ENCODE measurements at regions of chr6 and their contacts with region 1.

Region 1: GRCh38 chr6:99330159-99330558 is 19.3 kb downstream of the FAXC start:
- DNase-seq: peak; percentile 52
- H3K4me3 Mint-ChIP-seq: no peak overlapping the region
- H3K27ac Mint-ChIP-seq: no peak overlapping the region
- H3K4me1 Mint-ChIP-seq: no peaks in the 10 kb centered on the region
- H3K27me3 Mint-ChIP-seq: no peaks in the 10 kb centered on the region
- CTCF ChIP-seq: peak; percentile 66

Region 2: DNA sequence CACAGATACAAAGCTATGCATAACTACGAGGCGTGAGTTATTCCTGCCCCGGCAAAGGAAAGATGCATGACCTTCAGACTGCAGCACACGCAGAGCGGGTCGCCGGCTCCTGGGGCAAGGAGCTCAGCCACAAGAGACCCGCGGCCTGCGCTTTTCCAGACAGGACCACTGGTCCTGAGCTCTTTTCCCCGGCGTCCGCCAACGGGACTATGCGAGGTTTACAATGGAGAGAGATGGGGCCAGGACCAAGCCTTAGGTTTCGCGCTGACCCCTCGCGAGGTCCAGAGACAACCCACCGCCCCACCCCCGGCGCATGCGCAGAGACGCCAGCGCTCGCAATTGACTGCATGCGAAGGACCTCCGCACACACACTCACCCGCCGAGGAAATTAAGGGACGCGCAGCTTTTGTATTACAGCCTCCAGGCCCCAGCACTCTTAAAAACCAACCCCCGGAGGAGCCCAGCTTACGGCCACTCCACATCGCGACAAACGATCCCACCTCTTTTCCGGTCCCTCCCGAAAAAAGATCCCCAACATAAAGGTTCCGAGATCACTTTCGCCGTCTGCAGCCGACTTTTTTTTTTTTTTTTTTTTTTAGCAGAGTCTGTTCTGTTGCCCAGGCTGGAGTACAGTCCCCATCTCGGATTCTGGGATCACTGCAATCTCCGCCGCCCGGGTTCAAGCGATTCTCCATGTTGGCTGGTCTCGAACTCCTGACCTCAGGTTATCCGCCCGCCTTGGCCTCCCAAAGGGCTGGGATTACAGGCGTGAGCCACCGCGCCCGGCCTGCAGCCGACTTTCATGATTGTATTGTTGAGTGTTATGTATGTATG is 63.8 kb after region 1 on chr6 and contains the start of gene COQ3:
- CTCF ChIA-PET with region 1: interaction called, 4 read pairs
- intact Hi-C with region 1: loop called (anchors 1 kb)
- DNase-seq: peak; percentile 78
- H3K4me3 Mint-ChIP-seq: peak within 1 kb of the TSS; percentile 85
- H3K27ac Mint-ChIP-seq: peak within 1 kb of the TSS; percentile 96
- H3K4me1 Mint-ChIP-seq: no peaks in the 10 kb centered on the region
- H3K27me3 Mint-ChIP-seq: no peaks in the 10 kb centered on the region
- CTCF ChIP-seq: no peak
- total RNA-seq, gene COQ3: 5.8 and 7.6 TPM in 2 replicates

Region 3: GRCh38 chr6:99425647-99426453 is 95.7 kb after region 1 on chr6:
- CTCF ChIA-PET with region 1: interaction called, 13 read pairs
- intact Hi-C with region 1: loop called (anchors 1 kb)
- DNase-seq: peak; percentile 80
- H3K4me3 Mint-ChIP-seq: peak overlapping the region; percentile 98
- H3K27ac Mint-ChIP-seq: peak overlapping the region; percentile 100
- H3K4me1 Mint-ChIP-seq: peaks cover 40% of the 10 kb centered on the region
- H3K27me3 Mint-ChIP-seq: no peaks in the 10 kb centered on the region
- CTCF ChIP-seq: peak; percentile 19